CD8-positive, alpha-beta T cell (primary cell): ENCODE measurements at regions of chr6 and their contacts with region 1.

Region 1: DNA sequence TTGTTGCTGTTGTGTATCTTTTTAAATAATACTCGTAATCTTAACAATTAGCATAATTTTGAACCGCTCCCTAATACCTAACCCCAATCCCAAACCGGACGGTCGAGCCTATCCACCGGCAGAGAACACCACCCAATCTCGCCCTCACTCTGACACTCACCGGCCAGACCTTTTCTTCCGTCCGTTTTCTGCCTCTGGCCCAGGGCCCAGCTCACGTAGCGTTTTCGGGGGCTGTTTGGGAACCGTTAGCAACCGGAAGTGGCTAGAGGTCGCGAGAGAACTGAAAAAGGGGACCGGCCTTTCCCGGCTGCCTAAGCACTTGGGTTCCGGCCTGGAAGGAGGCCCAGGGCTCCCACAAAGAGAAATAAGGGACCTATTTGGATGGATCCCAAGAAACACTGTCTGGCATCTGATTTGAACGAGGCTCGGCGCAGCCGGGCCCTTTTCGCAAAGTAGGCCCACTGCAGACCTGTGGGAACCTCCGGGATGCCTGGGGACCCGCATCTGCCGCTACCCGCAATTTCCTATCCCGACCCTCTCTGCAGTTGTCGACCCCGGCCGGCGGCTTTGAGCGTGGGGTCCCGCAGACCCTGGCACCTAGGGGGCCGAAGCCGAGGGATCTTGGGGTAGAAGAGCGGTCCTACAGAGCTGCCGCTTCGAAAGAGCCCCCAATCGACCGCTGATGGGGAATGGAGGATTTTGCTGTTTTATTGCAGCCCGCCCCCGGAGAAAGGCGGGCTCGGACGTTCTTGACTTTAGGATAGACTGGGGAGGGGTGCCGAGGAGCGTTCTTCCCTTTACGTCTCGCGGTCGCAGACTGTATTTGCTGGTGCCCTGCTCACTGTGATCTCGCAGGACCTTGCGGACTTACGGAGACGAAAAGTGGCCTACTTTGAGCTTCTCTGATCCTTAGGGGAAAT is 4.8 kb upstream of the ZKSCAN8 start:
- DNase-seq: peak; percentile 52 to 91 (median 77)
- ATAC-seq: peak; percentile 35
- H3K4me3 ChIP-seq: peak overlapping the region; percentile 79 to 88
- H3K4me3 Mint-ChIP-seq: peak overlapping the region; percentile 94
- H3K27ac ChIP-seq: peak overlapping the region; percentile 87 to 92
- H3K27ac Mint-ChIP-seq: peak overlapping the region; percentile 99
- H3K4me1 ChIP-seq: peaks cover 28% of the 10 kb centered on the region
- H3K4me1 Mint-ChIP-seq: peaks cover 71% of the 10 kb centered on the region
- H3K27me3 ChIP-seq: no peaks in the 10 kb centered on the region
- H3K27me3 Mint-ChIP-seq: no peaks in the 10 kb centered on the region
- CTCF ChIP-seq: no peak

Region 2: GRCh38 chr6:27114792-27115191 is 1022.1 kb before region 1 on chr6:
- CTCF ChIA-PET with region 1: no interaction called
- POLR2A ChIA-PET with region 1: no interaction called
- intact Hi-C with region 1: no loop called
- DNase-seq: no peak
- ATAC-seq: no peak
- H3K4me3 ChIP-seq: no peak overlapping the region
- H3K4me3 Mint-ChIP-seq: no peak overlapping the region
- H3K27ac ChIP-seq: no peak overlapping the region
- H3K27ac Mint-ChIP-seq: no peak overlapping the region
- H3K4me1 ChIP-seq: no peaks in the 10 kb centered on the region
- H3K4me1 Mint-ChIP-seq: no peaks in the 10 kb centered on the region
- H3K27me3 ChIP-seq: peaks cover 0 to 7% of the 10 kb centered on the region in 2 experiments
- H3K27me3 Mint-ChIP-seq: peaks cover 19% of the 10 kb centered on the region
- CTCF ChIP-seq: no peak

Region 3: GRCh38 chr6:27871924-27872638 is 264.8 kb before region 1 on chr6:
- CTCF ChIA-PET with region 1: no interaction called
- POLR2A ChIA-PET with region 1: no interaction called
- intact Hi-C with region 1: no loop called
- DNase-seq: peak; percentile 72 to 97 (median 85)
- ATAC-seq: peak; percentile 75
- H3K4me3 ChIP-seq: peak overlapping the region; percentile 54 to 67
- H3K4me3 Mint-ChIP-seq: peak overlapping the region; percentile 82
- H3K27ac ChIP-seq: peak overlapping the region; percentile 81 to 86
- H3K27ac Mint-ChIP-seq: peak overlapping the region; percentile 98
- H3K4me1 ChIP-seq: peaks cover 20% of the 10 kb centered on the region
- H3K4me1 Mint-ChIP-seq: peaks cover 36% of the 10 kb centered on the region
- H3K27me3 ChIP-seq: peaks cover 0 to 3% of the 10 kb centered on the region in 2 experiments
- H3K27me3 Mint-ChIP-seq: no peaks in the 10 kb centered on the region
- CTCF ChIP-seq: peak; percentile 48

Region 4: DNA sequence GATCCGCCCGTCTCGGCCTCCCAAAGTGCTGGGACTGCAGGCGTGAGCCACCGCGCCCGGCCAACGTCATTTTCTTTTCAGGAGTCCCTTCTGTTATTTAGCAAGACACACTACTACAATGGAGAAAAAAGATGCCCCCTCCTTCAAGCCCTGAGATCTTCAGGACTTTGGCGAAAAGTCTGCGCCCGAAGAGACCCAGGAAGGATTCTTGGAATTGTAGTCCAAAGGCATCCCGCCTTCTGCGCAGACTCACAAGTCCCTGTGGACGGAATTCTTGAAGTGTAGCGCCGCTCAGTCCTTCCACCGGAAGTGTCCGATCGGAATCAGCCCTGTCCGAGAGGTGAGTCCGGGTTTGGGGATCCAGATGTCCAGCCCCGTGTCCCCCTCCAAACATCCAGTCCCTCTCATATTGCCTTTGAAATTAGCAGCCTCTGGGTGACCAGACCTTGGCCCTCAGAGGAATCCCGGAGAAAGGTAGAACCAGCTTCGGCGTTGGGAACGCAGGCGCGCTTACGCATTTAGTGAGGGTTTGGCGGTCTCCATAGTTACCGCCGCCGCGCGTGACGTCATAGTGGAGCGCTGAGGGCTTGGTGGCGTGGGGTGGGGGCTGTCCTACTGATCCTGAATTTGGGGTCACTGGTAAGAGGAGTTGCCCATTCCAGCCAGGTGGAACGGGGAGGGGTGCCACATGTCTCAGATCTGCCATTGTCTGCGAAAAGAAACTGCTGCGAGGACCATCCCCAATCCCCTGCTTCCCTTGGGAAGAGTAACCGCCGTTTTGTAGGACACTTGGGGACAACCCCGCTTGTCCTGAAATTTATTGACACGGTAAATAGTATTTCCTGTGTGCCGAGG is 56.0 kb before region 1 on chr6:
- CTCF ChIA-PET with region 1: no interaction called
- POLR2A ChIA-PET with region 1: no interaction called
- intact Hi-C with region 1: loop called (anchors 1 kb)
- DNase-seq: peak; percentile 86 to 96 (median 94)
- ATAC-seq: peak; percentile 74
- H3K4me3 ChIP-seq: peak overlapping the region; percentile 69 to 93
- H3K4me3 Mint-ChIP-seq: peak overlapping the region; percentile 98
- H3K27ac ChIP-seq: peak overlapping the region; percentile 91 to 96
- H3K27ac Mint-ChIP-seq: peak overlapping the region; percentile 99
- H3K4me1 ChIP-seq: peaks cover 13% of the 10 kb centered on the region
- H3K4me1 Mint-ChIP-seq: peaks cover 21% of the 10 kb centered on the region
- H3K27me3 ChIP-seq: no peaks in the 10 kb centered on the region
- H3K27me3 Mint-ChIP-seq: no peaks in the 10 kb centered on the region
- CTCF ChIP-seq: no peak

Region 5: DNA sequence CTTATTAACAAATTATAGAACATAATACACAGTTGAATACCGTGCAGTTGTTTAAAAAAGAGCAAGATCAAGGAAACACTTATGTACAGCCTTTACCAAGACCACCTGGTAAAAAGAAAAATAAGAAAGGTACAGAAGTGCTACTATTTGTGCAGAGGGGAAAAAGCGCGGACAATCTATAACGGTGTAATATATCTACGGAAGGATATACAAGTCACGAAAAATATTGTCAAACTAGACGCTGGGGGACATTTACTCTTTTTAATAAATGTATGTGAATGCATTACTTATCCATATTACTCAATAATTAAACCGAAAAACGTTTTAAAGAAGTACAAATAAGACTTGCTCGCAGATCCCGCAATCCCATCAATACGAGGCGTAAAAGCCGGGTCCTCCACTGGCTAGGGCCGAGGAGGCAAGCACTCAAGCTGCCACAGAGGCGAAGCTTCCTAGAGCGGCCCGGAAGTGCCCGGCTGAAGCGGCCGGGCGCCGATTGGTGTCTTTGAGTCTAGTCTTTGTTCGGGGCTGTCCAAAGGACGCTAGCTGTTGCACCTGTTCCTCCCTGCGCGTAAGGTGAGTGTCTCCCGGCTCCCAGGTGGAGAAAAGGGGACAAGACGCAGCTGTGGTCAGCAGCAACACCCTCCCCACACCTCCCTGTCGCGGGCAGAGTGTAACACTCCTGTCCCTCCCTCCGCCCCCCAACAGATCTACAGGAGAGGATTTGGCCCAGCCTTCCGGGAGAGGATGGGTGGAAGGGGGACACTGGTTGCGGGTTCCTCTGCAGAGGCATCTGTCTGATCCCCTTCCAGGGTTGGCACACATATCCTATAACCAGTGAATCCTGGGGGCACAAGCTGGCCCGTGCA is 12.5 kb before region 1 on chr6 and contains the start of gene ZSCAN16:
- CTCF ChIA-PET with region 1: interaction called, 7 read pairs
- POLR2A ChIA-PET with region 1: interaction called, 21 read pairs
- intact Hi-C with region 1: loop called (anchors 1 kb)
- DNase-seq: peak; percentile 59 to 86 (median 76)
- ATAC-seq: peak; percentile 72
- H3K4me3 ChIP-seq: peak within 1 kb of the TSS; percentile 79 to 86
- H3K4me3 Mint-ChIP-seq: peak within 1 kb of the TSS; percentile 95
- H3K27ac ChIP-seq: peak within 1 kb of the TSS; percentile 76 to 89
- H3K27ac Mint-ChIP-seq: peak within 1 kb of the TSS; percentile 97
- H3K4me1 ChIP-seq: peaks cover 11% of the 10 kb centered on the region
- H3K4me1 Mint-ChIP-seq: peaks cover 42% of the 10 kb centered on the region
- H3K27me3 ChIP-seq: no peaks in the 10 kb centered on the region
- H3K27me3 Mint-ChIP-seq: no peaks in the 10 kb centered on the region
- CTCF ChIP-seq: no peak
- total RNA-seq, gene ZSCAN16: 5.2 to 6.0 TPM

Region 6: DNA sequence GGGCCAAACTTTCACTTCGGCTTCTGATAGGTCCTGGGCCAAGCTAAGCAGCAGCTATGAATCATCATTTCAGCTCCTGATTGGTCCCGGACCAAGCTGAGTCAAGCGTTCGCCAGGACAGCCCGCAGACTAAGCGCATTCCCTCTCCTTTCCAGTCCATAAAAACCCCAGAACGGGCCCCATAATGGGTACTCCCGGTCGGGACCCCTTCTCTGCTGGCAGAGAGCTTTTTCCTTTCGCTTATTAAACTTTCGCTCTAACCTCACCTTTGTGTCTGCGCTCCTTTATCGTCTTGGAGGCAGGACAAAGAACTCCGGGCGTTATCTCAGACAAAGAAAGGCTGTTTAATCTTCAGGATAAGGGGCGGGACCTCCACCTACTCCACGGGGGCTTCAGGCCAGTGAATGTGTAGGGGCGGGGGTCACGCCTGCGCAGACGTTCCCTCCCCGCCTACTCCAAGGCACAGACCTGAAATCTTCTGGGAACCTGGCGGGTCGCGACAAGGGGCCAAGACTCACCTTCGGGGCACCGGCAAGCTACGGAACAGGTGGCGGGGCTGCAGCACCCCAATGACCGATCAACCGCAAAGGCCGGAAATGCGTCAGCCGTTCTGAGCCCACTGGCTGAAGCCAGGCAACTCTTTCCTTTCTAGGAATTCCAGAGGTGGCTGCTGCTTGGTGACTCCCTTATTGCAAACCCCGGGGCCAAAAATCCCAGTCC is 198.9 kb after region 1 on chr6 and contains the start of gene ZSCAN31:
- CTCF ChIA-PET with region 1: no interaction called
- POLR2A ChIA-PET with region 1: interaction called, 4 read pairs
- intact Hi-C with region 1: loop called in 1 of 2 experiments (anchors 1 kb)
- DNase-seq: peak; percentile 64 to 94 (median 80)
- ATAC-seq: peak; percentile 86
- H3K4me3 ChIP-seq: peak within 1 kb of the TSS; percentile 77 to 85
- H3K4me3 Mint-ChIP-seq: no peak within 1 kb of the TSS
- H3K27ac ChIP-seq: peak within 1 kb of the TSS; percentile 94 to 96
- H3K27ac Mint-ChIP-seq: no peak within 1 kb of the TSS
- H3K4me1 ChIP-seq: peaks cover 15% of the 10 kb centered on the region
- H3K4me1 Mint-ChIP-seq: peaks cover 9% of the 10 kb centered on the region
- H3K27me3 ChIP-seq: no peaks in the 10 kb centered on the region
- H3K27me3 Mint-ChIP-seq: no peaks in the 10 kb centered on the region
- CTCF ChIP-seq: no peak
- total RNA-seq, gene ZSCAN31: 1.4 to 1.9 TPM

Region 7: DNA sequence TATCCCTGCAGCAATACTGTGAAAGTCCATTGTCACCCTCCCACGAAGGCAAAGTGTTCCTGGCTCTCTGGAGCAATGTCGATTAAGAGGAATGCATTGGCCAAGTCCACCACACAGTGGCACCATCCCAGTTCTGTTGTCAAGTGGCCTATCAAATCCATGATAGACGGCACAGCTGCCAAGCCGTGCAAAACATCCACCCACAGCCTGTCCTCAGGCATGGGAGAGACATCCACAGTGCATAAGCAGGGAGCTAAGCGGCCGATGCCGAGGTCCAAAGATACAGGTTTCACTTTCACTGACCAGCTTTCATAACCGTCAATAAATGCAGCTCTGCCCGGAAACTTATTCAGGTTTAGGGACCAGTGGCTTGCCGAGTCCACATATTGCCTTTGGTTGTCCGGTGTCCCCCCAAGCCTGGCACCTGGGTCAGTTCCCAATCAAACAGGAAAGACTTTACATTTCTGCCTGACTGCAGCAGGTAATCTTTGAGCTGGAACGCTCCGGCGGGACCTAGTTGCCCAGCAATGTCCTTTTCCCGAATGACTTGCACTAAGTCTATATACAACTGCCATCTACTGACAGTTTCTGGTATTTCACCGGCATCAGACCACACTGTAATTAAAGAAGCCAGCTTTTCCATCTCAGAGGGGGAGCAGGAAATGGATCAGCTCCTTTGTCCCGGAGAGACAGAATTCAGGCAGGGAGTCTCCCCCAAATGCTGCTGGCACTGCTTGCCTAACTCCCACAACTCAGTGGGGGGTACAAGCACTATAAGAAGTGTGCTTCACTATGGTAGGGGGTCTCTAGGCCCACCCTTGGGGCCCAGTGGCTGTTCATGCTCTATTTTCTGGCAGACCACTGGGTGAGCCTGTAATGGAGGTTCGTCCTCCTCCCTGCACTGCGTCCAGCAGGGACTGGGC is 219.2 kb after region 1 on chr6:
- CTCF ChIA-PET with region 1: interaction called, 10 read pairs
- POLR2A ChIA-PET with region 1: interaction called, 4 read pairs
- intact Hi-C with region 1: loop called (anchors 1 kb)
- DNase-seq: peak in 8 of 9 experiments; percentile 32 to 85 (median 62)
- ATAC-seq: peak; percentile 91
- H3K4me3 ChIP-seq: peak overlapping the region; percentile 39 to 65
- H3K4me3 Mint-ChIP-seq: peak overlapping the region; percentile 90
- H3K27ac ChIP-seq: peak overlapping the region in 1 of 2 experiments; percentile 27
- H3K27ac Mint-ChIP-seq: peak overlapping the region; percentile 52
- H3K4me1 ChIP-seq: peaks cover 17% of the 10 kb centered on the region
- H3K4me1 Mint-ChIP-seq: peaks cover 33% of the 10 kb centered on the region
- H3K27me3 ChIP-seq: no peaks in the 10 kb centered on the region
- H3K27me3 Mint-ChIP-seq: no peaks in the 10 kb centered on the region
- CTCF ChIP-seq: peak; percentile 83

Region 8: DNA sequence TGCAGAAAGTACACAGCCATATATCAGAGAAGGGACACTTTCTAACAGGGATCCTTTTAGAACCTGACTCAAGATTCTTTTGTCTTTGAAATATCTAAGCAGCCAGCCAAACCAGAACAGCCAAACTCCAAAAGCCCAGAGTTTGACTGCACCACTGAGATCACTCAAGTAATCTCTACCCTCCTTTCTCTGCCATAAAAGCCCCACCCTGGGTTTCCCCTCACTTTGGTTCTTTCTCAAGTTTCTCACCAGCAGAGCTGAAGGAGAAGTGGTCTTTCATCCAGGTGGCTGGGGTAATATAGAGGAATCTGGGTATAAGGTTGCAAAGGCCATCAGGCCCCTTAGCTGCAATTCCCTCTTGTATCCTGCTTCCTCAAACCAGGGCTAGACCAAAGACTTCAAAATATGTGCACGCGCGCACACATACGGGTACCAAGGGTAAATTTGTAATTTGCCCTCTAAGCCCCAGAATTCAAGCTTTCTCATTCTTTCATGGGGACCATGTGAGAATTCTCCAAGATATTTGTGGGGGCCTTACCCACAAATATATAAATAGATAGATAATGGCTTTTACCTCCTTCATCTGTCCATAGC is 431.8 kb after region 1 on chr6:
- CTCF ChIA-PET with region 1: no interaction called
- POLR2A ChIA-PET with region 1: no interaction called
- intact Hi-C with region 1: no loop called
- DNase-seq: no peak
- ATAC-seq: no peak
- H3K4me3 ChIP-seq: no peak overlapping the region
- H3K4me3 Mint-ChIP-seq: no peak overlapping the region
- H3K27ac ChIP-seq: no peak overlapping the region
- H3K27ac Mint-ChIP-seq: no peak overlapping the region
- H3K4me1 ChIP-seq: no peaks in the 10 kb centered on the region
- H3K4me1 Mint-ChIP-seq: no peaks in the 10 kb centered on the region
- H3K27me3 ChIP-seq: peaks cover 0 to 2% of the 10 kb centered on the region in 2 experiments
- H3K27me3 Mint-ChIP-seq: peaks cover 52% of the 10 kb centered on the region
- CTCF ChIP-seq: no peak

Region 9: DNA sequence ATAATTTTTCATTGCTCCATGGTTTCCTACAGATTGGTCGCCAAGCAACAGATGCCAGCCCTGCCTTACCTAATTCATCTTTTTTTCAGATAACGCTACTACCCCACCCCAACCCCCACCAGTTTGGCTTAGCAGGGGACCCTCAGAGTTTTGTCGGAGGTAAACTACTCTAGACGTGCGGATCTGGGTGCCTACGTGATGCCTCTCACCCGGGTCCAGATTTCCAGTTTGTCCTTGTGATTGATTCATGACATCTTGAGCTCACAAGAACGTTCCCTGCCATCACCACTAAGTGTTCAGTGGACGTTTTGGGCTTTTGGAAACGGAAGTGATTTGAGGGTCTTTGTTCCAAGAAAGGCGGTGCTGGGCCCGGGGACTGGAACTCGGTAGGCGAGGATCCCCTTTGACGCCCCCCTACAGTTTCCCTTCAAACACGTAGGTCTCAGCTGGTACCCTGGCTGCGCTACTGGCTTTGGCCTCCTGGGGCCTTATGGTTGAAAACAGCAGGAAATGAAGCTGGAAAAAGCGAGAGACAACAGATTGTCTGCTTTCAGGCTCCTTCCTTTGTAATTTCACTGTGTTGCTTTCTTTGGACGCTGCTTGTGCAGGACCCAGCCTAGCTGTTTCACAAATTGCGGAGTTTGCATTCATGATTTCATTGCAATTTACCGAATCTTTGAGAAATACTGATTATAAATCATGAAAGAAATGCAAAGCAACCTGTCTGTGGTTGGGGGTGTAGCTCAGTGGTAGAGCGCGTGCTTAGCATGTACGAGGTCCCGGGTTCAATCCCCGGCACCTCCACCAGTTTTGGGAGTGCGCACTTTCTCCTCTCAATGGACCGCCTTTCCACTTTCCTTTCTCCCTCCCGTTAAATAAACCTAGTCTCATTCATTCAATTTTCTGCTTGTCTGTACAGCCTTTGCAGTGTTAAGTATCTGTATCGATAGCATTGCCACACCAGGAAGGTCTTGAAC is 469.9 kb after region 1 on chr6:
- CTCF ChIA-PET with region 1: no interaction called
- POLR2A ChIA-PET with region 1: no interaction called
- intact Hi-C with region 1: no loop called
- DNase-seq: peak in 3 of 9 experiments; percentile 29 to 44 (median 44)
- ATAC-seq: peak; percentile 55
- H3K4me3 ChIP-seq: peak overlapping the region in 1 of 2 experiments; percentile 5
- H3K4me3 Mint-ChIP-seq: peak overlapping the region; percentile 58
- H3K27ac ChIP-seq: no peak overlapping the region
- H3K27ac Mint-ChIP-seq: no peak overlapping the region
- H3K4me1 ChIP-seq: no peaks in the 10 kb centered on the region
- H3K4me1 Mint-ChIP-seq: peaks cover 7% of the 10 kb centered on the region
- H3K27me3 ChIP-seq: peaks cover 3 to 13% of the 10 kb centered on the region in 2 experiments
- H3K27me3 Mint-ChIP-seq: peaks cover 58% of the 10 kb centered on the region
- CTCF ChIP-seq: no peak